Motor neuron (in vitro differentiated cells): ENCODE measurements at regions of chr12 and their contacts with region 1.

Region 1: DNA sequence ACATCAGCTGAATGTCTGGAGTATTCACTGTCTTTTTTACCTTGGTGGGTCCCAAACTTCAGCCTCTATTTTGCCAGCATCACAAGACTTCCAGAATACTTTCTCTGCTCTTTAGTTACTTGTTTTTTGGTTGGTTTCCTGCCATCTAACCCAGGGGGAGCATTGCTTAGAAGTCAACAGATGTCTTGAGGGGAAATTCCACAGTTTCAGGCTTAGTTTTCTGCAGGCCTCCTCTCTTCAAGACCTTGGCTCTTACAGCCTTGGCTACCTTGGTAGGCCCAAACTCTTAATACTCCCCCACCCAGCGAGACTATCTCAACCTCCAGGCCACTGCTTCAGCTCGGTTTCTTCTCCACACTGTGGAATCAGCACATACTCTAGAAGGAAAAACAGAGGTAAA is 41.7 kb downstream of the NEDD1 start:
- ATAC-seq: no peak
- H3K4me3 ChIP-seq: no peak overlapping the region
- H3K27ac ChIP-seq: no peak overlapping the region
- H3K4me1 ChIP-seq: no peaks in the 10 kb centered on the region

Region 2: DNA sequence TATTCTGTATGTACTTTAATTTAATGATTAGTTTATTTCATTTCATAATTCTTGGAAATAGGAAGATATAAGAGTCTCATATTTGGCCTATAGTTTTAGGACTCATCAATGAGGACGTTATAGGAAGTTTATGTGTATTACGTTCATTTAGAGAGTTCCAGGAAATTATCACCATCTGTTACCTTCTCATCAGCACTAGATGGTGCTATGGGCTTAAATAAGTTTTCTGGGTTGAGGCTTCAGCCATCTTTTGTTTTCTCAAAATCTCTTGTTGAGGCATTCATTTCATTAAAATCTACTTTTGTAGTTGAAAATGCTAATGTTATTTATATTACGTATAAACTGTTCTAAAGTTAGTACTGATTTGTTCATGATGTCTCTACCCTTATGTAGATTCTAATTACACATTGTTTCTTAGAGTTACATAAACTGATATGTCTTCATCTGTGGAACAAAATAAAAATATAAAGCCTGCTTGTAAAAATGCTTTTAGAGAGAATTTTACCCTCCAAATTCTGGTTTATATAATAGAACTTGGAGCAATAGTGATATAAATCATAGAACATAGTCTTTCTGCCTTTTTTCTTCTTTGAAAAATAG is 370.2 kb before region 1 on chr12:
- in situ Hi-C with region 1: loop called in 2 of 9 experiments (anchors 25 kb)
- ATAC-seq: peak in 6 of 8 experiments; percentile 41 to 85 (median 62)
- H3K4me3 ChIP-seq: no peak overlapping the region
- H3K27ac ChIP-seq: no peak overlapping the region
- H3K4me1 ChIP-seq: peaks cover 5 to 10% of the 10 kb centered on the region in 2 donors

Region 3: GRCh38 chr12:96766232-96766631 is 182.6 kb before region 1 on chr12:
- in situ Hi-C with region 1: loop called in 1 of 9 experiments (anchors 25 kb)
- ATAC-seq: no peak
- H3K4me3 ChIP-seq: no peak overlapping the region
- H3K27ac ChIP-seq: no peak overlapping the region
- H3K4me1 ChIP-seq: peaks cover 0 to 7% of the 10 kb centered on the region in 2 donors